T-cell (primary cell): ENCODE measurements at regions of chr5 and their contacts with region 1.

Region 1: GRCh38 chr5:91383027-91383955 is at the start of gene ARRDC3:
- DNase-seq: peak; percentile 90 to 99 (median 96)
- ATAC-seq: peak; percentile 39 to 40 (median 40)
- H3K4me3 ChIP-seq: peak within 1 kb of the TSS; percentile 96 to 97
- H3K4me3 Mint-ChIP-seq: peak within 1 kb of the TSS; percentile 91 to 96 (median 92)
- H3K27ac ChIP-seq: peak within 1 kb of the TSS; percentile 99
- H3K27ac Mint-ChIP-seq: peak within 1 kb of the TSS; percentile 99
- H3K4me1 ChIP-seq: peaks cover 11 to 17% of the 10 kb centered on the region in 2 experiments
- H3K4me1 Mint-ChIP-seq: peaks cover 22 to 27% (median 25%) of the 10 kb centered on the region in 3 donors
- H3K27me3 ChIP-seq: no peaks in the 10 kb centered on the region
- H3K27me3 Mint-ChIP-seq: no peaks in the 10 kb centered on the region
- total RNA-seq, gene ARRDC3: 107 to 219 (median 127) TPM

Region 2: GRCh38 chr5:90409318-90410177 is 973.7 kb before region 1 on chr5 and contains the start of gene CETN3:
- CTCF ChIA-PET with region 1: interaction called in 1 of 2 experiments, 6 read pairs
- POLR2A ChIA-PET with region 1: interaction called, 10 to 22 read pairs
- DNase-seq: peak; percentile 76 to 95 (median 85)
- ATAC-seq: peak; percentile 93 to 95 (median 94)
- H3K4me3 ChIP-seq: peak within 1 kb of the TSS; percentile 97 to 98
- H3K4me3 Mint-ChIP-seq: no peak within 1 kb of the TSS
- H3K27ac ChIP-seq: peak within 1 kb of the TSS; percentile 95
- H3K27ac Mint-ChIP-seq: no peak within 1 kb of the TSS
- H3K4me1 ChIP-seq: peaks cover 7 to 14% of the 10 kb centered on the region in 2 experiments
- H3K4me1 Mint-ChIP-seq: peaks cover 18 to 22% (median 19%) of the 10 kb centered on the region in 3 donors
- H3K27me3 ChIP-seq: peaks cover 0 to 1% of the 10 kb centered on the region in 2 experiments
- H3K27me3 Mint-ChIP-seq: no peaks in the 10 kb centered on the region
- total RNA-seq, gene CETN3: 6.9 to 17.6 (median 15.8) TPM

Region 3: GRCh38 chr5:90932052-90932699 is 451.1 kb before region 1 on chr5:
- CTCF ChIA-PET with region 1: interaction called, 6 to 30 read pairs
- POLR2A ChIA-PET with region 1: no interaction called
- DNase-seq: peak in 18 of 35 experiments; percentile 0 to 62 (median 5)
- ATAC-seq: no peak
- H3K4me3 ChIP-seq: no peak overlapping the region
- H3K4me3 Mint-ChIP-seq: no peak overlapping the region
- H3K27ac ChIP-seq: no peak overlapping the region
- H3K27ac Mint-ChIP-seq: no peak overlapping the region
- H3K4me1 ChIP-seq: no peaks in the 10 kb centered on the region
- H3K4me1 Mint-ChIP-seq: peaks cover 0 to 4% (median 2%) of the 10 kb centered on the region in 3 donors
- H3K27me3 ChIP-seq: no peaks in the 10 kb centered on the region
- H3K27me3 Mint-ChIP-seq: peaks cover 9 to 11% of the 10 kb centered on the region in 2 donors

Region 4: DNA sequence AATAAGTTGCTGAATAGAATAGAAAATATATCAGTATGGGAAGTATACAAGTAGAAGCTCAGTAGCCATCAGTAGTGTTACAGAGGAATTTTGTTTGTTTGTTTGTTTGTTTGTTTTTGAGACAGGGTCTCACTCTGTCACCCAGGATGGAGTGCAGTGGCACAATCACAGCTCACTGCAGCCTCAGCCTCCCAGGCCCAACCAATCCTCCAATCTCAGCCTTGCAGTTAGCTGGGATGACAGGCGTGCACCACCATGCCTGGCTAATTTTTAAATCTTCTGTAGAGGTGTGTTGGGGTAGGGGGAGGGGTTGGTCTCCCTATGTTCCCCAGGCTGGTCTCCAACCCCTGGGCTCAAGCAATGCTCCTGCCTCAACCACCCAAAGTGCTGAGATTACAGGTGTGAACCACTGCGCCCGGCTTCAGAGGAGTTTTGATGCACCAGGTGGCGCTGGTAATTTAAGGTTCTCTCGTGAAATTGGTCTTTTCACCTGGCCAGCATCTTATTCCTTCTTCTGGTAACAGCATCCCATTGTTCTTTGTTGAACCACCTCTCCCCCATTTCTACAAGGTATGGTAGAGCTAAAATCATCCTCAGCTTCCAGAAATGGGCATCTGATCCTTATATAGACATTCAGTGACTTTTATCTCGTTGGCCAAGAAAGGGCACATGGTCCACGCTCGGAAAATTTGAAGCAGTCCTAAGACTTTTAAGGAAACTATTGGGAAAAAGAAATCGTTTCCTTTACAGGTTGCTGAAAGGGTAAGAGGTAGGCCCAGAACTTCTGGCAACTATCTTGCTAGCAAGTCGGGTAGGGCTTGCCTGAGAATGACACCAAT is 157.2 kb before region 1 on chr5:
- CTCF ChIA-PET with region 1: interaction called, 45 to 126 read pairs
- POLR2A ChIA-PET with region 1: interaction called, 3 to 4 read pairs
- DNase-seq: peak; percentile 6 to 74 (median 47)
- ATAC-seq: peak; percentile 57 to 74 (median 72)
- H3K4me3 ChIP-seq: no peak overlapping the region
- H3K4me3 Mint-ChIP-seq: no peak overlapping the region
- H3K27ac ChIP-seq: no peak overlapping the region
- H3K27ac Mint-ChIP-seq: no peak overlapping the region
- H3K4me1 ChIP-seq: no peaks in the 10 kb centered on the region
- H3K4me1 Mint-ChIP-seq: no peaks in the 10 kb centered on the region
- H3K27me3 ChIP-seq: no peaks in the 10 kb centered on the region
- H3K27me3 Mint-ChIP-seq: peaks cover 3 to 4% of the 10 kb centered on the region in 2 donors

Region 5: DNA sequence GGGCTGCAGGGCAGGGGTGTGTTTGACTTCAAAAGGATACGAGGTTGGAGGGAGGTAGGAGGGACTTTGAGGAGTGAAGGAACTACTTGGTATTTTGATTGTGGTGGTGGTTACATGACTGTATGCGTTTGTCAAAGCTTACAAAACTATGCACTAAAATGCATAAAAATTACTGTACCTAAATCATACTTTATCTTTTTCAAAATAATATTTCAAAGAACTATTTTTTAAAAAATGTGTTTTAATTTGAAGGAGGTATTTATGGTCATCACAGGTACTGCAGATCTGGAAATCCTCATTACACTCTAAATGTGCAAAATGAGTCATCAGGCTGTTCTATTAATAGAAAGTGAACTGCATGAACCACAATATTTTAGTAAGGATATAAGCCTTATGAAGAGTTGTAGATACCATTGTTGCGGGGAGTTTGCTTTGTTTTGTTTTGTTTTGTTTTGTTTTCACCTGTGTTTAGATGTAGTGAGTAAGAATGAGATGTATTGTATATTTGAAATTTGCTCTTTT is 117.0 kb before region 1 on chr5:
- CTCF ChIA-PET with region 1: interaction called in 1 of 2 experiments, 10 read pairs
- POLR2A ChIA-PET with region 1: interaction called in 1 of 2 experiments, 3 read pairs
- DNase-seq: peak in 1 of 35 experiments; percentile 8
- ATAC-seq: peak; percentile 37 to 57 (median 50)
- H3K4me3 ChIP-seq: no peak overlapping the region
- H3K4me3 Mint-ChIP-seq: no peak overlapping the region
- H3K27ac ChIP-seq: no peak overlapping the region
- H3K27ac Mint-ChIP-seq: peak overlapping the region in 1 of 2 donors; percentile 10
- H3K4me1 ChIP-seq: peaks cover 10 to 14% of the 10 kb centered on the region in 2 experiments
- H3K4me1 Mint-ChIP-seq: peaks cover 16 to 24% (median 20%) of the 10 kb centered on the region in 3 donors
- H3K27me3 ChIP-seq: no peaks in the 10 kb centered on the region
- H3K27me3 Mint-ChIP-seq: no peaks in the 10 kb centered on the region

Region 6: GRCh38 chr5:91311697-91312501 is 71.4 kb before region 1 on chr5:
- CTCF ChIA-PET with region 1: interaction called, 3 to 19 read pairs
- POLR2A ChIA-PET with region 1: interaction called, 7 to 17 read pairs
- DNase-seq: peak; percentile 35 to 84 (median 62)
- ATAC-seq: peak; percentile 79 to 88 (median 83)
- H3K4me3 ChIP-seq: no peak overlapping the region
- H3K4me3 Mint-ChIP-seq: peak overlapping the region; percentile 57 to 73 (median 72)
- H3K27ac ChIP-seq: peak overlapping the region; percentile 79
- H3K27ac Mint-ChIP-seq: peak overlapping the region; percentile 90 to 93
- H3K4me1 ChIP-seq: peaks cover 20 to 49% of the 10 kb centered on the region in 2 experiments
- H3K4me1 Mint-ChIP-seq: peaks cover 42 to 56% (median 55%) of the 10 kb centered on the region in 3 donors
- H3K27me3 ChIP-seq: no peaks in the 10 kb centered on the region
- H3K27me3 Mint-ChIP-seq: no peaks in the 10 kb centered on the region

Region 7: GRCh38 chr5:91419571-91420537 is 36.6 kb after region 1 on chr5:
- CTCF ChIA-PET with region 1: interaction called, 9 to 75 read pairs
- POLR2A ChIA-PET with region 1: interaction called, 5 to 8 read pairs
- DNase-seq: peak; percentile 33 to 84 (median 64)
- ATAC-seq: peak in 2 of 4 experiments; percentile 34 to 37
- H3K4me3 ChIP-seq: no peak overlapping the region
- H3K4me3 Mint-ChIP-seq: no peak overlapping the region
- H3K27ac ChIP-seq: no peak overlapping the region
- H3K27ac Mint-ChIP-seq: no peak overlapping the region
- H3K4me1 ChIP-seq: peaks cover 0 to 2% of the 10 kb centered on the region in 2 experiments
- H3K4me1 Mint-ChIP-seq: peaks cover 13 to 21% (median 16%) of the 10 kb centered on the region in 3 donors
- H3K27me3 ChIP-seq: no peaks in the 10 kb centered on the region
- H3K27me3 Mint-ChIP-seq: no peaks in the 10 kb centered on the region